ENCODE measurements at regions of chr15 and their contacts with region 1.

Region 1: GRCh38 chr15:40694688-40695468 is at the start of gene RAD51:
- DNase-seq: peak; percentile 95 to 96 (median 95)
- H3K4me3 ChIP-seq: peak within 1 kb of the TSS; percentile 58 to 100 (median 95)
- H3K4me3 Mint-ChIP-seq: peak within 1 kb of the TSS; percentile 99 to 100
- H3K27ac ChIP-seq: peak within 1 kb of the TSS; percentile 84 to 86
- H3K27ac Mint-ChIP-seq: peak within 1 kb of the TSS; percentile 88 to 97 (median 96)
- H3K4me1 ChIP-seq: peaks cover 16 to 21% of the 10 kb centered on the region in 2 donors
- H3K4me1 Mint-ChIP-seq: peaks cover 30% of the 10 kb centered on the region
- H3K27me3 ChIP-seq: no peaks in the 10 kb centered on the region
- H3K27me3 Mint-ChIP-seq: no peaks in the 10 kb centered on the region
- CTCF ChIP-seq: no peak
- polyA plus RNA-seq, gene RAD51: 0.28 to 0.61 TPM in 2 of 3 donors, not detected in the other

Region 2: GRCh38 chr15:40564591-40565332 is 130.1 kb before region 1 on chr15 and contains the start of gene CCDC32:
- intact Hi-C with region 1: loop called in 1 of 2 experiments (anchors 10 kb)
- DNase-seq: peak; percentile 96 to 98 (median 97)
- H3K4me3 ChIP-seq: peak within 1 kb of the TSS; percentile 54 to 99 (median 91)
- H3K4me3 Mint-ChIP-seq: peak within 1 kb of the TSS; percentile 98 to 99
- H3K27ac ChIP-seq: peak within 1 kb of the TSS; percentile 83 to 97
- H3K27ac Mint-ChIP-seq: peak within 1 kb of the TSS; percentile 95 to 99 (median 98)
- H3K4me1 ChIP-seq: peaks cover 23 to 30% of the 10 kb centered on the region in 2 donors
- H3K4me1 Mint-ChIP-seq: peaks cover 35% of the 10 kb centered on the region
- H3K27me3 ChIP-seq: peaks cover 0 to 4% of the 10 kb centered on the region in 2 donors
- H3K27me3 Mint-ChIP-seq: peaks cover 1 to 8% (median 2%) of the 10 kb centered on the region in 3 donors
- CTCF ChIP-seq: no peak
- polyA plus RNA-seq, gene CCDC32: 7.5 to 37.3 (median 30.8) TPM

Region 3: GRCh38 chr15:40593588-40594428 is 101.1 kb before region 1 on chr15 and contains the start of gene KNL1:
- intact Hi-C with region 1: loop called (anchors 10 kb)
- DNase-seq: peak; percentile 92 to 96 (median 94)
- H3K4me3 ChIP-seq: peak within 1 kb of the TSS; percentile 73 to 98 (median 89)
- H3K4me3 Mint-ChIP-seq: peak within 1 kb of the TSS; percentile 96 to 99
- H3K27ac ChIP-seq: peak within 1 kb of the TSS; percentile 88 to 92
- H3K27ac Mint-ChIP-seq: peak within 1 kb of the TSS; percentile 95 to 100 (median 99)
- H3K4me1 ChIP-seq: peaks cover 17 to 23% of the 10 kb centered on the region in 2 donors
- H3K4me1 Mint-ChIP-seq: peaks cover 26% of the 10 kb centered on the region
- H3K27me3 ChIP-seq: no peaks in the 10 kb centered on the region
- H3K27me3 Mint-ChIP-seq: peaks cover 0 to 2% (median 0%) of the 10 kb centered on the region in 3 donors
- CTCF ChIP-seq: no peak
- polyA plus RNA-seq, gene KNL1: 0.13 to 0.38 (median 0.16) TPM

Region 4: DNA sequence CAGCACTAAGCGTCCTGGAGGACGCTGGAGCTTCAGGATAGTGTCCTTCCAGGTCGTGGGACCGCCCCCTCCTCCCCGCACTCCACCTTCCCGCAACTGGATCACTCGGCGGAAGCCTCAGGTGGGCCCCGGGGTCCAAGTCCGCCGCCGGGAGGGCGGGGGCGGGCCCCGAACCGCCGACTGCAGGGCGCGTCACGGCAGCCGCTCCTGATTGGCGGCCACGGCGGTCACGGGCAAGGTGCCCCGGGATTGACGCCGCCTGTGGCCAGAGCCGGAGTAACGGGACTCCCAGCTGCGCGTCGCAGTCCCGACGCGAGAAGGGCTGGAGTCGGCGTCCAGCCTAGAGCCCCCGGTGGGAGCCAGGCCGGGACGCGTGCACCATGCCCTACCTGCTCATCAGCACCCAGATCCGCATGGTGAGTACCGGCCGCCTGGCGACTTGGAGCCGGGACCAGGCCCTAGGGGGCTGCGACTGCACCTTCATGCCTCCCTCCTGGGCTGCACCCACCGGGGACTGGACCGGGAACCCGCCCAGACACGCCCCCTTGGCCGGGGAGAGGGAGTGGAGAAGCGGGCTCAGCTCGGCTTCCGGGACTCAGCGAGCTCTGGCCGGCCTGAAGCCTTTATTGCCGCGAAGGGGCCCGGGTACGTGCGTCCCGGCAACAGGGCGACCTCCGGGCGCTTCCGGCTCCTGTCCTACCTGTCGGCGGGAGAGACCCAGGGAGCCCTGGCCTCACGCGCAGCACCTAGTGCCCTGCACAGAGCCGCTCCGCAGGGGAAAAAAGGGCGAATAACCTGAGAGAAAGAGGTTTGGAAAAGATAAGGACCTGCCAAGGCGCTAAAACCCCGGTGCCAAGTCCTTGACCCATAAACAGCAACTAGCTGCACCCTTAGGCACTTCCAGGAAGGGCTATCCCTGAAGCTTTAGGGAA is 69.2 kb after region 1 on chr15 and contains the start of gene GCHFR:
- intact Hi-C with region 1: loop called (anchors 5 to 10 kb)
- DNase-seq: peak; percentile 56 to 58 (median 57)
- H3K4me3 ChIP-seq: peak within 1 kb of the TSS; percentile 59 to 89 (median 62)
- H3K4me3 Mint-ChIP-seq: peak within 1 kb of the TSS; percentile 85 to 91
- H3K27ac ChIP-seq: peak within 1 kb of the TSS; percentile 70 to 82
- H3K27ac Mint-ChIP-seq: peak within 1 kb of the TSS; percentile 81 to 97 (median 96)
- H3K4me1 ChIP-seq: peaks cover 41 to 48% of the 10 kb centered on the region in 2 donors
- H3K4me1 Mint-ChIP-seq: peaks cover 40% of the 10 kb centered on the region
- H3K27me3 ChIP-seq: no peaks in the 10 kb centered on the region
- H3K27me3 Mint-ChIP-seq: peaks cover 2 to 12% (median 11%) of the 10 kb centered on the region in 3 donors
- CTCF ChIP-seq: peak; percentile 57
- polyA plus RNA-seq, gene GCHFR: 19.1 to 46.7 (median 45.9) TPM

Region 5: GRCh38 chr15:40893733-40894688 is 199.1 kb after region 1 on chr15 and contains the start of gene VPS18:
- intact Hi-C with region 1: loop called in 1 of 2 experiments (anchors 10 kb)
- DNase-seq: peak; percentile 97 to 98 (median 97)
- H3K4me3 ChIP-seq: peak within 1 kb of the TSS; percentile 87 to 98 (median 89)
- H3K4me3 Mint-ChIP-seq: peak within 1 kb of the TSS; percentile 97 to 98
- H3K27ac ChIP-seq: peak within 1 kb of the TSS; percentile 91 to 97
- H3K27ac Mint-ChIP-seq: peak within 1 kb of the TSS; percentile 98 to 100 (median 99)
- H3K4me1 ChIP-seq: peaks cover 24 to 35% of the 10 kb centered on the region in 2 donors
- H3K4me1 Mint-ChIP-seq: peaks cover 31% of the 10 kb centered on the region
- H3K27me3 ChIP-seq: no peaks in the 10 kb centered on the region
- H3K27me3 Mint-ChIP-seq: peaks cover 1 to 14% (median 7%) of the 10 kb centered on the region in 3 donors
- CTCF ChIP-seq: peak; percentile 91
- polyA plus RNA-seq, gene VPS18: 12.1 to 22.8 (median 21.8) TPM

Measured in CD14-positive monocyte (primary cell).